HepG2 (cell line): ENCODE measurements at regions of chr21 and their contacts with region 1.

Region 1: DNA sequence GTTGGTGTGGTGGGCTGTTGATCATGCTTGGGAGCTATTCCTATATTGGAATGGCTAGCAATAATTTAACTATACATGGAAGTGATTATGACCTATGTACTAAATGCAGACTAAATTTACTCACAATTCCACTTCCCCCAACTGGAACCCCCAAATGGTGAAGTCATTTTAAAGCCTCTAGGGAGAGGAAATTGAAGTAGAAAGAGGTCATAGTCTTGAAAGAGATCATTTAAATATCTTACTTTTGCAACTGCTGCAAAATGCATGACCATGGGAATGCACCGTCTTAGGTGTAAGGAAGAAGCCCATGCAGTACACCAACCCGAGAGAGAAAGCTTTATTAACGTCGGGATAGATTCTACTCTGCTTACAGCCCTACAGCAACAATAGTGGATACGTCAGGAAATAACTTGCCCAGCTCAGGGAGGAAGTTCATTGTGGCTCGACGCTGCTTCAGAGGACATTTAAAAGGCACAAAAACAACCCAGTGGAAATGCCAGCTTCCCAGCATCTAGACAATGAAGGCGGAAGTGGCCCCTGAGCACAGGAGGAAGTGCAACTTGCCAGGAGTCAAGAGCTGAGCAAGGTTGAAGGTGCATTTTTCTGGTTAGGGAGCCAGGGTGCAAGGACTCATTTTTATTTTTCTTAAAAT is 26.5 kb downstream of the CYYR1 start:
- DNase-seq: no peak
- ATAC-seq: no peak
- H3K4me3 ChIP-seq: no peak overlapping the region
- H3K27ac ChIP-seq: no peak overlapping the region
- H3K4me1 ChIP-seq: no peaks in the 10 kb centered on the region
- H3K27me3 ChIP-seq: no peaks in the 10 kb centered on the region
- CTCF ChIP-seq: no peak
- EP300 ChIP-seq: no peak
- POLR2A ChIP-seq: no peak
- RAD21 ChIP-seq: no peak

Region 2: GRCh38 chr21:26565111-26565510 is 18.5 kb after region 1 on chr21:
- CTCF ChIA-PET with region 1: no interaction called
- POLR2A ChIA-PET with region 1: no interaction called
- in situ Hi-C with region 1: no loop called
- intact Hi-C with region 1: loop called (anchors 1 kb)
- DNase-seq: no peak
- ATAC-seq: no peak
- H3K4me3 ChIP-seq: no peak overlapping the region
- H3K27ac ChIP-seq: no peak overlapping the region
- H3K4me1 ChIP-seq: no peaks in the 10 kb centered on the region
- H3K27me3 ChIP-seq: no peaks in the 10 kb centered on the region
- CTCF ChIP-seq: no peak
- EP300 ChIP-seq: no peak
- POLR2A ChIP-seq: no peak
- RAD21 ChIP-seq: no peak

Region 3: DNA sequence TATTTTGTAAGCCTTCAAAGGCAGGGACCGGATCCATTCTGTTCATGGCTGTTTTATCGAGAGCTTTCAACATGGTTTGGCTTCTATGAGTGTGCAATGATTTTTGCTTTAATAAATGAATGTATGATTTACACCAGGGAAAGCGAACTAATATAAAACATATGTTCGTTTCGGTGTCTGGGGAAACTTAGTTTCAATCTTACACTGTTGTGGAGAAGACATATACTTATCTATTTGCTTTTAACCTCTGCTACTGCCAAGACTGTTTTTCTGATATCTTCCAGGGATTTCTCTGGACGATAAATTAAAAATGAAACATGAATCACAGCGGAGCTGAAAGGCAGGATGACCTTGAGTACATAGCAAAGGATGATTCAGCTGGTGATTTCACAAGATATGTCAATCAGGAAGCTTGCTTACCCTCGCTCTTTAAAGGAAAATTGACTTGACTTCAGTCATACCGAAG is 41.2 kb after region 1 on chr21:
- CTCF ChIA-PET with region 1: no interaction called
- POLR2A ChIA-PET with region 1: no interaction called
- in situ Hi-C with region 1: no loop called
- intact Hi-C with region 1: no loop called
- DNase-seq: no peak
- ATAC-seq: no peak
- H3K4me3 ChIP-seq: no peak overlapping the region
- H3K27ac ChIP-seq: no peak overlapping the region
- H3K4me1 ChIP-seq: no peaks in the 10 kb centered on the region
- H3K27me3 ChIP-seq: no peaks in the 10 kb centered on the region
- CTCF ChIP-seq: no peak
- EP300 ChIP-seq: no peak
- POLR2A ChIP-seq: no peak
- RAD21 ChIP-seq: no peak